ENCODE measurements at regions of chr9 and their contacts with region 1.

Region 1: DNA sequence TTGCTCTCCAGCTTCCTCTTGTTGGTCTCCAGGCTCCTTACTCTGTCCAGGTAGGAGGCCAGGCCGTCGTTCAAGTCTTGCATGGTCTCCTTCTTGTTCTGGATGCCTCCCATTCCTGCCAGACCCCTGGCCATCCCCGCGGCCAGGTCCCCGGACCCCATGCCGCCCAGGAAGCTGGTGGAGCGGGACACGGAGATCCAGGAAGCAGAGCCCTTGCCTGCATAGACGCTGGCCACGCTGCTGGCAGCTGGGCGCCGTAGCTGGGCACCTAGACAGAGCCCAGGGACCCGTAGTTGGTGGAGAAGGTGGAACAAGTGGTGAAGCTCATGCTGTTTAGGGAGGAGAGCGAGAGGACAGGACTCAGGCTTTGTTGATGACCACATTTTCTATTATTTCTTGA is 1584.0 kb upstream of the ACO1 start:
- DNase-seq: no peak
- ATAC-seq: no peak
- H3K4me3 ChIP-seq: no peak overlapping the region
- H3K4me3 Mint-ChIP-seq: no peak overlapping the region
- H3K27ac ChIP-seq: no peak overlapping the region
- H3K27ac Mint-ChIP-seq: no peak overlapping the region
- H3K4me1 ChIP-seq: no peaks in the 10 kb centered on the region
- H3K4me1 Mint-ChIP-seq: no peaks in the 10 kb centered on the region
- H3K27me3 ChIP-seq: no peaks in the 10 kb centered on the region
- H3K27me3 Mint-ChIP-seq: no peaks in the 10 kb centered on the region

Region 2: GRCh38 chr9:31824860-31825259 is 1024.4 kb after region 1 on chr9:
- CTCF ChIA-PET with region 1: no interaction called
- POLR2A ChIA-PET with region 1: interaction called in 1 of 2 experiments, 10 read pairs
- DNase-seq: no peak
- ATAC-seq: no peak
- H3K4me3 ChIP-seq: no peak overlapping the region
- H3K4me3 Mint-ChIP-seq: no peak overlapping the region
- H3K27ac ChIP-seq: no peak overlapping the region
- H3K27ac Mint-ChIP-seq: no peak overlapping the region
- H3K4me1 ChIP-seq: no peaks in the 10 kb centered on the region
- H3K4me1 Mint-ChIP-seq: no peaks in the 10 kb centered on the region
- H3K27me3 ChIP-seq: peaks cover 0 to 3% of the 10 kb centered on the region in 2 experiments
- H3K27me3 Mint-ChIP-seq: peaks cover 0 to 12% of the 10 kb centered on the region in 2 donors